HCT116 (cell line): ENCODE measurements at regions of chr17 and their contacts with region 1.

Region 1: DNA sequence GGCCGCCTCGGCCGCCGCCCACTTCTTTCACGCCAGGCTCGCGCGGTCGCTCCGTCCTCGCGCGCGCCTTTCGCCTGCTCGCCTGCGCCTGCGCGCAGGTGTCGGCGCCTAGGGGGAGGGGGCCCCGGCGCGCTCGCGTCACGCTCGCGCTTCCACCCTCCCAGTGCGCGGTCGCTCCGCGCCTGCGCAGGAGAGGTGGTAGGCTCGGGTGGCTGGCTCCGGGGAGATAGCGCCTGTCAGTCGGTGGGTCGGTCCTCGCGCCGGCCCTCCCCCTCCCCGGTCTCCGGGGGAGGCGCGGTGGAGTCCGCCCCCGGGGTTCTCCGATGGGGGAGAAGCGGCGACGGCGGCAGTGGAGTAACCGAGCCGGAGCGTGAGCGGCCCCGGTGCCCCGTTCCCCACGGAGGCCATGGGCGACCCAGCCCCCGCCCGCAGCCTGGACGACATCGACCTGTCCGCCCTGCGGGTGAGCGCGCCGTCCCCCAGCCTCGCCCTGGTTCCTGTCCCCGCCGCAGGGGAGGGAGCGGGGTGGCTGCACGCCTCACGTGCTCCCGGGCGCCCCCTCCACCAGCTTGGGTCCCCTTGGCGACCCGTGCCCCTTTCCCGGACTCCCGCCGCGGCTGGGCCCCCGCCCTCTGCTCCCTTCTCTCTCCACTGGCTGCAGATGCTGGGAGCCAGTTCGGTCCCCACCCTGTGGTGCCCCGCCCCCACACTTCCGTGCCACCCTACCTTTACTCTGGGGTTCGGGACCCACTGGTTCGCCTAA is at the start of gene MINK1:
- DNase-seq: peak; percentile 87
- ATAC-seq: peak; percentile 93
- H3K4me3 ChIP-seq: peak within 1 kb of the TSS; percentile 71 to 93
- H3K27ac ChIP-seq: peak within 1 kb of the TSS; percentile 98
- H3K4me1 ChIP-seq: peaks cover 16 to 24% of the 10 kb centered on the region in 2 experiments
- H3K27me3 ChIP-seq: no peaks in the 10 kb centered on the region
- CTCF ChIP-seq: no peak
- POLR2A ChIP-seq: peak; percentile 81
- RAD21 ChIP-seq: no peak
- total RNA-seq, gene MINK1: 85.2 TPM

Region 2: DNA sequence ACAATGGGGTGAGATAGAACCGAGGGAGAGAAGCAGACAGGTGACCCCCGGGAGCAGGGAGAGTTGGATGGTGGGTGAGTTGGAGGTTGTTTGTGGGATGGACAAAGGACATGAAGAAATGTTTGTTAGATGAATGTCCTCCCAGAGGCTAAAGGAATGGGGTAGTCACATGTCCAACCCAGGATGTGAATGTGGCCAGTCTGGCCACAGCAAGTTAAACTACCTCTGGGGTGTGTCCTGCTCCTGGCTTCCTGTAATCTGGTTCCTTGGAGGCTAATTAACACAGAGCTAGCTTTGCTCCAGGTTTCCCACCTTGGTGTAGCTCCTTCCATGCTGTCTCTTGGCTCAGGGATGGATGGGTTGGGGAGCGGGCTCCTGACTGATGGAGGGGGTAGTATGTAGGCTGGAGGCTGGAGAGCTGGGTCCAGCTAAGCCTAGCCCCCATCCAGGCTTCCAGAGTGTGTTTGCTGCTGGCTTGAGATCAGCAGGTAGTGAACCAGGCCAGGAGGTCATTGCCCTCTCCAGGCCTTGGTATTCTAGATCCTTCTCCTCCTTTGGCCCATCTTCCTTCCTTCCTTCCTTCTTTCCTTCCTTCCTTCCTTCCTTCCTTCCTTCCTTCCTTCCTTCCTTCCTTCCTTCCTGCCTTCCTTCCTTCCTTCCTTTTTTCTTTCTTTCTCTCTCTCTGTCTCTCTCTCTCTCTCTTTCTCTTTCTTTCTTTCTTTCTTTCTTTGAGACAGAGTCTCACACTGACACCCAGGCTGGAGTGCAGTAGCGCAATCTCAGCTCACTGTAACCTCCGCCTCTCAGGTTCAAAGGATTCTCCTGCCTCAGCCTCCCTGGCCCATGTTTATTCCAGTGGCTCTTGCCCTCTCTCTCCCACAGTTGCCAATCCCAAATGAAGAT is 438.9 kb before region 1 on chr17:
- CTCF ChIA-PET with region 1: no interaction called
- POLR2A ChIA-PET with region 1: no interaction called
- RAD21 ChIA-PET with region 1: no interaction called
- intact Hi-C with region 1: no loop called
- DNase-seq: no peak
- ATAC-seq: no peak
- H3K4me3 ChIP-seq: no peak overlapping the region
- H3K27ac ChIP-seq: no peak overlapping the region
- H3K4me1 ChIP-seq: peaks cover 14 to 24% of the 10 kb centered on the region in 2 experiments
- H3K27me3 ChIP-seq: no peaks in the 10 kb centered on the region
- CTCF ChIP-seq: no peak
- POLR2A ChIP-seq: no peak
- RAD21 ChIP-seq: no peak

Region 3: GRCh38 chr17:4881761-4882555 is 48.6 kb after region 1 on chr17:
- CTCF ChIA-PET with region 1: no interaction called
- POLR2A ChIA-PET with region 1: no interaction called
- RAD21 ChIA-PET with region 1: no interaction called
- intact Hi-C with region 1: loop called (anchors 10 kb)
- DNase-seq: no peak
- ATAC-seq: peak; percentile 98
- H3K4me3 ChIP-seq: no peak overlapping the region
- H3K27ac ChIP-seq: no peak overlapping the region
- H3K4me1 ChIP-seq: no peaks in the 10 kb centered on the region
- H3K27me3 ChIP-seq: no peaks in the 10 kb centered on the region
- CTCF ChIP-seq: peak; percentile 89 to 97 (median 90)
- POLR2A ChIP-seq: no peak
- RAD21 ChIP-seq: peak; percentile 89

Region 4: DNA sequence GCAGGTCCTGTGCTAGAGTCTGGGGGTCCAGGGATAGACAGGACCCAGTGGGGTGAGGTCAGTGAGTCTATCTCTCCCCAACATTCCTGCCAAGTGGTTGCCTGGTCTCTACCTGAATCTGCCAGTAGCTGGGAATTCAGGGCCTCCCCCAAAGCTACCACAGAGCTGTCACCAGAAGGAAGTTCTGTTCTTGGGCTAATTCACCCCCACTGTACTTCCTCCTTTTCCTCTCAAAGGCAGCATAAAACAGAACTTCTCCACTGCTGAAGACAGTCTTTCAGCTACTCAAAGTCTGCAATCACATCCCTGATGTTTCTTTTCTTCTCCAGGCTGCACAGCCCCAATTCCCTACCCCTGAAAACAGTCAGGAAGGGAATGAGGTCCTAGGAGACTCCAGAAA is 145.4 kb after region 1 on chr17:
- CTCF ChIA-PET with region 1: no interaction called
- POLR2A ChIA-PET with region 1: no interaction called
- RAD21 ChIA-PET with region 1: no interaction called
- intact Hi-C with region 1: no loop called
- DNase-seq: no peak
- ATAC-seq: no peak
- H3K4me3 ChIP-seq: no peak overlapping the region
- H3K27ac ChIP-seq: no peak overlapping the region
- H3K4me1 ChIP-seq: 0 out of 4 replicates have a peak, but pooled peaks cover 0 to 2% of the 10 kb centered on the region in 2 experiments
- H3K27me3 ChIP-seq: no peaks in the 10 kb centered on the region
- CTCF ChIP-seq: no peak
- POLR2A ChIP-seq: no peak
- RAD21 ChIP-seq: no peak